ENCODE measurements at regions of chr7 and their contacts with region 1.

Region 1: DNA sequence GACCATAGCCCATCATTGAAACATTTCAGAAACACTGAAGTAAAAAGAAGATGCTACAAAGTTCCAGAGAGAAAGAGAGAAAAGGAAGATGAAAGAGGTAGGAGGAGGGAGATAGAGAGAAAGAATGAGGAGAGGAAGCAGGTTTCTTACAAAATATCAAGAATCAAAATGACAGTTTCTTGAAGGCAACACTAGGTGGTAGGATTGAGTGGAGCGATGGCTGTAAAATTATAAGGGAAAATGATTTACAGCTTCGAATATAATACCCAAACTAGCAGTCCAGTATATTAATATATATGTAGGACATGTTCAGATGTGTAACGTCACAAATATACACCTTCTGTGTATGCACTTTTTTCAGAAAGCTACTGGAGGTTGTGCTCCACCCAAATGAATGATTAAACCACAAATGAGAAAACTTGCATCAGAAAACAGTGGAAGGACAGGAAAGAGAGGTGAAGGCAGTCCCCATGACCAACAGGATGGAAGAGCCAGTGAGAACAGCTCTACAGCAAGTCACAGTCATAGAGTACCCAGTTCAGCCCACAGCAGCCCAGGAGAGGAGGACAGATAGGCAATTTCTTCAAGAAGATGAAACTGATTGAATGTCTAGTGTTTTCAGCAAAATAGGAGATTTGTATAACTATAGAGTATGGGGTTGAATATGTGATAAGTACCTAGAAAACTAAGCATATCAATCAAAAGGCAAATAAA is 151.5 kb upstream of the TARP start:
- DNase-seq: no peak
- ATAC-seq: no peak
- H3K4me3 ChIP-seq: no peak overlapping the region
- H3K4me3 Mint-ChIP-seq: peak overlapping the region in 9 of 10 donors; percentile 15 to 78 (median 61)
- H3K27ac ChIP-seq: peak overlapping the region; percentile 34
- H3K27ac Mint-ChIP-seq: peak overlapping the region in 8 of 9 donors; percentile 67 to 91 (median 85)
- H3K4me1 ChIP-seq: peaks cover 20 to 41% of the 10 kb centered on the region in 2 donors
- H3K4me1 Mint-ChIP-seq: peaks cover 28 to 64% (median 58%) of the 10 kb centered on the region in 7 donors
- H3K27me3 ChIP-seq: no peaks in the 10 kb centered on the region
- H3K27me3 Mint-ChIP-seq: peaks cover 0 to 10% (median 0%) of the 10 kb centered on the region in 5 donors

Region 2: DNA sequence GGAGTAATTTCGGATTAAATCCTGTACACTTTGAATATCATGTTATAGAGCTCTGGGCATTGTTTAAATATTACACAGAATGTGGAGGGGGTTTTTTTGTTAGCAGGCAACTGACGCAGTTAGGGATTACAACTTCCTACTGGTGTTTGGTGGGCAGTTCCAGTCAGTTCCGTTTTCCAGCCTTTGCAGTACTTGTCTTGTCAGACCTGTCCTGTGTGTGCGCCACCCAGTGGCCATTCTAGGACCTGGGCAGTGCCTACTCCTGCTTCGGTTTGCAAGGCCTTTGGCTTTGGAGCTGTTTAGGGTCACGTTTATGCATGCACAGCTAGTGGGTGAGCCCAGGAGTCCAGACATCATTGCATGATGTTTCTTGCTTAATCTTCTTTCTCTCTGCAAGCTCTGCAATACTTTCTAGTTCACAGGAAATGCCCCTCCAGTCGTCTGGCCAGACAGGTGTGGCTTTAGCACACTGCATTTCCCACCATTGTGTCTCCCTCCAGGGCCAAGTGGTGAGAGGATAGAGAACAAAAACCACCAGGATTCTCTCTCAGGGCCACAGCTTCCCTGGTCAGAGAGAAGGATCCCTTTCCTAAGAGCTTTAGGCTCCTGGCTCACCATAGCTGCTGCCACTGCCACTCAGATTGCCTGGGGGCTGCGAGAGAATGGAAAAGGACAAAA is 55.0 kb before region 1 on chr7:
- CTCF ChIA-PET with region 1: interaction called, 3 read pairs
- POLR2A ChIA-PET with region 1: no interaction called
- intact Hi-C with region 1: loop called in 1 of 2 experiments (anchors 2 kb)
- DNase-seq: peak; percentile 39 to 79 (median 63)
- ATAC-seq: peak; percentile 89
- H3K4me3 ChIP-seq: no peak overlapping the region
- H3K4me3 Mint-ChIP-seq: peak overlapping the region; percentile 9 to 64 (median 56)
- H3K27ac ChIP-seq: peak overlapping the region; percentile 64
- H3K27ac Mint-ChIP-seq: peak overlapping the region in 8 of 9 donors; percentile 85 to 97 (median 92)
- H3K4me1 ChIP-seq: peaks cover 47% of the 10 kb centered on the region in 2 donors
- H3K4me1 Mint-ChIP-seq: peaks cover 33 to 79% (median 69%) of the 10 kb centered on the region in 7 donors
- H3K27me3 ChIP-seq: no peaks in the 10 kb centered on the region
- H3K27me3 Mint-ChIP-seq: no peaks in the 10 kb centered on the region

Region 3: GRCh38 chr7:38438970-38439369 is 14.1 kb after region 1 on chr7:
- CTCF ChIA-PET with region 1: interaction called, 3 read pairs
- POLR2A ChIA-PET with region 1: interaction called, 5 read pairs
- intact Hi-C with region 1: loop called in 1 of 2 experiments (anchors 1 kb)
- DNase-seq: no peak
- ATAC-seq: no peak
- H3K4me3 ChIP-seq: no peak overlapping the region
- H3K4me3 Mint-ChIP-seq: no peak overlapping the region
- H3K27ac ChIP-seq: no peak overlapping the region
- H3K27ac Mint-ChIP-seq: no peak overlapping the region
- H3K4me1 ChIP-seq: peaks cover 0 to under 1% of the 10 kb centered on the region in 2 donors
- H3K4me1 Mint-ChIP-seq: peaks cover 0 to 5% (median 3%) of the 10 kb centered on the region in 7 donors
- H3K27me3 ChIP-seq: no peaks in the 10 kb centered on the region
- H3K27me3 Mint-ChIP-seq: peaks cover 0 to 14% (median 0%) of the 10 kb centered on the region in 5 donors

Region 4: GRCh38 chr7:38535073-38535472 is 110.2 kb after region 1 on chr7:
- CTCF ChIA-PET with region 1: interaction called, 5 read pairs
- POLR2A ChIA-PET with region 1: no interaction called
- intact Hi-C with region 1: loop called in 1 of 2 experiments (anchors 10 kb)
- DNase-seq: no peak
- ATAC-seq: no peak
- H3K4me3 ChIP-seq: no peak overlapping the region
- H3K4me3 Mint-ChIP-seq: no peak overlapping the region
- H3K27ac ChIP-seq: no peak overlapping the region
- H3K27ac Mint-ChIP-seq: no peak overlapping the region
- H3K4me1 ChIP-seq: no peaks in the 10 kb centered on the region
- H3K4me1 Mint-ChIP-seq: peaks cover 0 to 8% (median 0%) of the 10 kb centered on the region in 7 donors
- H3K27me3 ChIP-seq: no peaks in the 10 kb centered on the region
- H3K27me3 Mint-ChIP-seq: peaks cover 6 to 17% (median 10%) of the 10 kb centered on the region in 5 donors

Region 5: DNA sequence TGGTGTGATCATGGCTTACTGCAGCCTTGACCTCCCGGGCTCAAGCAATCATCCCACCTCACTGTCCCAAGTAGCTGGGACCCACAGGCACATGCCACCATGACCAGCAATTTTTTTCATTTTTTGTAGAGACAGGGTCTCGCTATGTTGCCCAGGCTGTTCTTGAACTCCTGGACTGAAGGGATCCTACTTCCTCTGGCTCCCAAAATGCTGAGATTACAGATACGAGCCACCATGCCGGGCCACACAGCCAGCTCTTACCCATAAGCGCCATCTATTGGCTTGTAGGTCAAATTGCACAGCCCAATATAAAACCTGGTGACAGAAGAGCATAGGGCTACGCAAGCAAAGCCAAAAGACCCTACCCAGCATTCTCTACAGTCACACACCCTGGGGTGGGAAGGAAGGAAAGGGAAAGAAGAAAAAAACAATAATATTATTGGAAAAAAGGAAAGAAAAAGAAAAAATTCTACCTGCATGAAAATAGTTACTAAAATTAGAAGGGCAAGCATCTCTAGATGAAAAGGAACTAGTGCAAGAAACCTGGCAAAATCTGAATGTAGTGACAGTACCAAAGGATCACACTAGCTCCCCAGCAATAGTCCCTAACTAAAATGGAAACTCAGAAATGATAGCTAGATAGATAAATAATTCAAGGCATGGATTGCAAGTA is 235.7 kb after region 1 on chr7:
- CTCF ChIA-PET with region 1: interaction called, 4 read pairs
- POLR2A ChIA-PET with region 1: no interaction called
- intact Hi-C with region 1: loop called in 1 of 2 experiments (anchors 1 kb)
- DNase-seq: peak in 7 of 9 donors; percentile 7 to 51 (median 30)
- ATAC-seq: peak; percentile 78
- H3K4me3 ChIP-seq: no peak overlapping the region
- H3K4me3 Mint-ChIP-seq: no peak overlapping the region
- H3K27ac ChIP-seq: no peak overlapping the region
- H3K27ac Mint-ChIP-seq: no peak overlapping the region
- H3K4me1 ChIP-seq: no peaks in the 10 kb centered on the region
- H3K4me1 Mint-ChIP-seq: no peaks in the 10 kb centered on the region
- H3K27me3 ChIP-seq: no peaks in the 10 kb centered on the region
- H3K27me3 Mint-ChIP-seq: peaks cover 20 to 31% (median 27%) of the 10 kb centered on the region in 5 donors

Measured in naive thymus-derived CD4-positive, alpha-beta T cell (primary cell).